Ascending aorta (tissue), 2 donors: ENCODE measurements at regions of chr16 and their contacts with region 1.

Region 1: DNA sequence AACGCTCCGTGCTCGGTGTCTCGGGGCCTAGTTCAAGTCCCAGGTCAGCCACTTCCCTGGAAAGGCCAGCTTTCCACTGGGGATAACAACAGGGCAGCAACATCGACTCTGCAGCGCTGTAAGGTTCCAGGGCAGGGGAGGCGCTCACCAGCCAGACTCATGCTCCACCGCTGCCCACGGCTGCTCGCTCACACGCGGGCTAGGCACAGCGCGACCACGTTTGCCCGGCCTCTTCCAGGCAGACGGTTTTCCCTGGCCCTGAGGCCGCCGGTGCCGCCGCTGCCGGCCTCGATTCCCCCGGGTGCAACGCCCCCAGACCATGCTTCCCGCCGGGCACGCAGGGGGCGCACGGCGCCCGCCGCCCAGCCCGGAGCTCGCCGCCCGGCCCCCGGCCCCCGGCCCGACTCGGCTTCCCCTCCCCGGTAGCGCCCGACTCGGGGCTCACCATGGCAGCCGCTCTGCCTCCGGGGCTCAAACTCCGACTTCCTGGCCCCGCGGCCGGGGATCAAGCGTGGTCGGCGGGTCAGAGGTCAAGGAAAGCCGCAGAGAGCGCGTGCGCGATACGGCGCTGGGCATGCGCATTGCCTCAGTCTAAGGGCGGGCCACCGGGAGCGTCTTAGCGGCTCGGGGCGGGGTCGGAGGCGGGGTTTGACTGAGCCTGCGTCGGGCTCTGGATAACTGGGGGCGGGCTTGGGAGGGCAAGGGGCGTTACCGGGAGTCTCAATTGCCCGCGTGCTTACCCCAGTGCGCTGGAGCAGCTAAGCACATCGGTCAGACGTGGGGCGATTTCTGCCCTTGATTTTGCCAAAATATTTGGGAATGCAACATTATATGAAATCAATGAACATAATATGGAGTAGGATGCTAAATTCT is at the start of gene PAM16:
- DNase-seq: peak; percentile 79 to 97
- H3K4me3 ChIP-seq: peak within 1 kb of the TSS; percentile 85 to 88
- H3K27ac ChIP-seq: peak within 1 kb of the TSS; percentile 73 to 75
- H3K4me1 ChIP-seq: peaks cover 0 to 16% of the 10 kb centered on the region in 2 donors
- H3K27me3 ChIP-seq: no peaks in the 10 kb centered on the region
- CTCF ChIP-seq: peak in 1 of 3 experiments; percentile 14
- total RNA-seq, gene PAM16: 26.6 TPM

Region 2: DNA sequence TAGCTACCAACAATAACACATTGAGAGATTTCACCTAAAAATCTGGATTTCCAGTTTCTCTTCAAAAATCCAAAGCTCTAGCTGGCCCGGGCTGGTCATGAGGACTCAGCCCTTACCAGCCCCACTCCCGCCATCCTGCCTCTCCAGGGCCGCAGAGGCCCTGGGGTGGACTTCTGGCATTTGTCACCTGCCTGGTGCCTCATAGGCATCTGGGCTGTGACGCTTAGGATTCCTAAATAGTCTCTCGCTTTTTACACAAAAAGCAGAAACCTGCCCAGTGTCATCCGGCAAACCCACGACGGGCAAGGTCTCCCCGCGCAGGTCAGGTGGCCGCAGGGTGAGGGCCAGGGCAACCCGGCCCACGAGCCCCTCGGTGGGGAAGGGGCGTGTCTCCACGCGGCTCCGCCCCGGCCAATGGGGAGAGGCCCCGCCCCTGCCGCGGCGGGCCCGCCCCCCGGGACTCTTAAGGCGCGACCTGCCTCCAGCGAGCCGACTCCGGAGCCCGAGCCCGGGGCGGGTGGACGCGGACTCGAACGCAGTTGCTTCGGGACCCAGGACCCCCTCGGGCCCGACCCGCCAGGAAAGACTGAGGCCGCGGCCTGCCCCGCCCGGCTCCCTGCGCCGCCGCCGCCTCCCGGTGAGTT is 20.5 kb after region 1 on chr16 and contains the start of gene VASN:
- intact Hi-C with region 1: loop called (anchors 1 kb)
- DNase-seq: peak in 1 of 2 donors; percentile 91
- H3K4me3 ChIP-seq: peak within 1 kb of the TSS; percentile 64 to 81
- H3K27ac ChIP-seq: peak within 1 kb of the TSS; percentile 94 to 99
- H3K4me1 ChIP-seq: peaks cover 22 to 57% of the 10 kb centered on the region in 2 donors
- H3K27me3 ChIP-seq: no peaks in the 10 kb centered on the region
- CTCF ChIP-seq: no peak
- total RNA-seq, gene VASN: 218 TPM